Activated CD4-positive, alpha-beta memory T cell treated with anti-CD3 and anti-CD28 coated beads for 36 hours (primary cell): ENCODE measurements at regions of chr11 and their contacts with region 1.

Region 1: GRCh38 chr11:9613118-9613829 is 39.8 kb downstream of the WEE1 start:
- DNase-seq: peak; percentile 93
- H3K4me3 Mint-ChIP-seq: peak overlapping the region; percentile 81
- H3K27ac Mint-ChIP-seq: peak overlapping the region; percentile 97
- H3K4me1 Mint-ChIP-seq: peaks cover 34% of the 10 kb centered on the region
- H3K27me3 Mint-ChIP-seq: no peaks in the 10 kb centered on the region

Region 2: GRCh38 chr11:9363954-9364912 is 249.0 kb before region 1 on chr11:
- CTCF ChIA-PET with region 1: no interaction called
- POLR2A ChIA-PET with region 1: no interaction called
- intact Hi-C with region 1: loop called (anchors 5 kb)
- DNase-seq: peak; percentile 93
- H3K4me3 Mint-ChIP-seq: peak overlapping the region; percentile 74
- H3K27ac Mint-ChIP-seq: peak overlapping the region; percentile 88
- H3K4me1 Mint-ChIP-seq: peaks cover 35% of the 10 kb centered on the region
- H3K27me3 Mint-ChIP-seq: no peaks in the 10 kb centered on the region

Region 3: GRCh38 chr11:9565822-9566560 is 47.3 kb before region 1 on chr11:
- CTCF ChIA-PET with region 1: interaction called, 7 read pairs
- POLR2A ChIA-PET with region 1: no interaction called
- intact Hi-C with region 1: loop called (anchors 1 kb)
- DNase-seq: peak; percentile 80
- H3K4me3 Mint-ChIP-seq: peak overlapping the region; percentile 36
- H3K27ac Mint-ChIP-seq: peak overlapping the region; percentile 82
- H3K4me1 Mint-ChIP-seq: peaks cover 37% of the 10 kb centered on the region
- H3K27me3 Mint-ChIP-seq: no peaks in the 10 kb centered on the region

Region 4: DNA sequence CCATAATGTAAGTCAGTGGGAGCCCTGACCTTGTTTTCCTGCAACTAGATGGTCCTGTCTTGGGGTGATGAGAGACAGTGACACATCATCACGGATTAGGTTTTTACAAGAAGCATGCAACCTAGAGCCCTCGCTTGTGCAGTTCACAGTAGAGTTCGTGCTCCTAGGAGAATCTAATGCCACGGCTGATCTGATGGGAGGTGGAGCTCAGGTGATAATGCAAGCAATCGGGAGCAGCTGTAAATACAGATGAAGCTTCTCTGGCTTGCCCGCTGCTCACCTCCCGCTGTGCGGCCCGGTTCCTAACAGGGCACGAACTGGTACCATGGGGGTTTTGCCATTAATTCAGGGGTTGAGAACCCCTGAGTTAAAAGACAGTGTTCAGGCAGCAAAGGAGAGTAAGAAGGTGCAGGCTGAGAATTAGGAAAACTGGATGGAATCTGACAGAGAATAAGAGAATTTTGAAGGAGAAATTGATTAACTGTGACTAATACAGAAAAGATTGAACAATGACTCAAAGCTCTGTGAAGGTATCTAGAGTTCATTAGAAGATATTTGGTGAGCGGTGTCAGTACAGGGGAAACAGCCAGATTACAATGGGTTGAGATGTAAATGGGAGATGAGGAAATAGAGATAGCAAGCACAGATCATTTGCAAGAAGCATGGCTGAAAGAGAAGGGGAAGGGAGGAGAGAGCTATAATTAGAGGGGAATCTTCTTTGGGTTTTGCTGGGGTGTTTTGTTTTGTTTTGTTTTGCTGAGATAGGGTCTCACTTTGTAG is 18.8 kb before region 1 on chr11:
- CTCF ChIA-PET with region 1: interaction called, 63 read pairs
- POLR2A ChIA-PET with region 1: no interaction called
- intact Hi-C with region 1: no loop called
- DNase-seq: no peak
- H3K4me3 Mint-ChIP-seq: no peak overlapping the region
- H3K27ac Mint-ChIP-seq: no peak overlapping the region
- H3K4me1 Mint-ChIP-seq: no peaks in the 10 kb centered on the region
- H3K27me3 Mint-ChIP-seq: no peaks in the 10 kb centered on the region

Region 5: DNA sequence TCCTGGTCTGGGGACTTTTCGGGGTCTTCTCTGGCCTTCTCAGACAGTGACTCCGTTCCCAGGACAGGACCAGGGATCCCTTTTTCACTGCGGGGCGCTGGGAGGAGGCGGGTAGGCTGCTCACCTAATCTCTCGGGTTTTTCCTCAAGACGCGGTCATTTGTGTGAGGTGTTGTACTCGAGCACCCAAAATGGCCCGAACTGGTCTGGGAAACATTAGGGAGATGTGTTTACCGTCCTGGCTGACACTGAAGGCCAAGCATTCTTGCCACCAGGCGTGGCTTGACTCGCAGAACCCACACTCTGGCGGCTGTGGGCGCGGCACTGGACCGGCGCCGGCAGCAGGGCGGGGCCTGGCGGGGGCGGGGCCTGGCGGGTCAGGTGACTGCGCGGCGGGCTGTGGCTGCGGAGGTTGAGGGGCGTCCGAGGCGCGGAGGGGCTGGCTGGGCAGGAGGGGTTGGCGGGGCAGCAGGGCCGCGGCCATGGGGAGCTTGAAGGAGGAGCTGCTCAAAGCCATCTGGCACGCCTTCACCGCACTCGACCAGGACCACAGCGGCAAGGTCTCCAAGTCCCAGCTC is 50.5 kb after region 1 on chr11 and contains the start of gene SWAP70:
- CTCF ChIA-PET with region 1: interaction called, 3 read pairs
- POLR2A ChIA-PET with region 1: no interaction called
- intact Hi-C with region 1: loop called (anchors 1 kb)
- DNase-seq: peak; percentile 81
- H3K4me3 Mint-ChIP-seq: peak within 1 kb of the TSS; percentile 84
- H3K27ac Mint-ChIP-seq: no peak within 1 kb of the TSS
- H3K4me1 Mint-ChIP-seq: peaks cover 14% of the 10 kb centered on the region
- H3K27me3 Mint-ChIP-seq: peaks cover 26% of the 10 kb centered on the region
- total RNA-seq, gene SWAP70: 7.7 to 8.6 TPM

Region 6: DNA sequence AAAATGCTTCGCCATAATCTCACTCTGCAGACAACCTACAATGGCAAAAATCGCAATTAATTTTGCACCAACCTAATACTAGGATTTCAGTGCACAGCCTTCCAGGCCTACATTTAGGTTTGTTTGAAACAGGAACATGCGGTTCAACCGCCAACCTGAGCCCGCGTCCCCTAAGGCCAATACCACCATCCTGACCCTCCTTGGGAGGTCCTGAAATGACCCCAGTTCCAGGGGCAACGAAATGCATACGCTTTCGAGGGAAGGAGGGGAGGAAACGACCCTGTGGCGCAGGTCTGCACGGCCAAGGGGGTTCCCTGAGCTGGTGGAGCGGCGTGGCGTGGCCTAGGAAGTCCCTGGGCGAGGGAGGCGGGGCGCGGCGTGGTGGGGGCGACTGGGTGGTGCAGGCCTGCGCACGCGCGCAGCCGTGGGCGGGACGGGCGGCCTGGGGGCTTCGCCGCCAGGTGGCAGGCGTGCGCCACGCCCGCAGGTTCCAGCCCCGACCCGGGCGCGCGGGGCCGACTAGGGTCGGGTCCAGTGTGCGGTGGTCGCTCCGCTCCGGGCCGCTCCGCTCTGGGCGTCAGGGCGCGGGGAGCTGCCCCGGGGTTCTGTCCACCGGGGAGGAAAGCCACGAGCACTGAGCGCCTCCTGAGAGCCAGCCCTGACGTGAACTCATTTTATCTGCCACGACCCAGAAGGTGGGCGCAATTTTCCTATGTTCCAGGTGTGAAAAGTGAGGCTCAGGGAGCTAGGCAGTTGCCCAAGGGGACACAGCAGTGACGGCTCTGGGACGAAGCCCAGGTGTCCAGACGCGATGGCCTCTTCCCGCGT is 144.7 kb after region 1 on chr11:
- CTCF ChIA-PET with region 1: interaction called, 88 read pairs
- POLR2A ChIA-PET with region 1: interaction called, 15 read pairs
- intact Hi-C with region 1: loop called (anchors 1 kb)
- DNase-seq: peak; percentile 95
- H3K4me3 Mint-ChIP-seq: peak overlapping the region; percentile 75
- H3K27ac Mint-ChIP-seq: peak overlapping the region; percentile 79
- H3K4me1 Mint-ChIP-seq: peaks cover 34% of the 10 kb centered on the region
- H3K27me3 Mint-ChIP-seq: no peaks in the 10 kb centered on the region